Panc1 (cell line): ENCODE measurements at regions of chr15 and their contacts with region 1.

Region 1: DNA sequence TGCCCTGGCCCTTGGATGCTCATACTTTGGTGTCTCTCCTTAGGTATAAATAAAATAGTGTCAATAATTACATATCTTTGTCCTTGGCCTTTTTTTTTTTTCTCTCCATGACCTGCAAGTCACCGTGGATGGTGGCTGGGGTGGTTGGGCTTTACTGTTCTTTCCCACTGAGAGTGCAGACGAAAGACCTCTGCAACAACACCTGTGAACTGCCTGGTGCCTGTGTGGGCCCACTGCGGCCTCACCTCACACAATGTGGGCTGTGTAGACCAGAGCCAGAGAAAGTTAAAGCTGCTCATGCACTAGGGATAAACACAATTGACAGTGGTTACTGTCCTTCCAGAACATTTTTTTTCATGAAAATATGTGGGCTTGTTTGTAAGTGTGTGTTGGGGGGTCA is 39.0 kb downstream of the CCDC32 start:
- DNase-seq: no peak
- ATAC-seq: no peak
- H3K4me3 ChIP-seq: no peak overlapping the region
- H3K27ac ChIP-seq: no peak overlapping the region
- H3K4me1 ChIP-seq: no peaks in the 10 kb centered on the region
- H3K27me3 ChIP-seq: no peaks in the 10 kb centered on the region
- CTCF ChIP-seq: no peak

Region 2: GRCh38 chr15:40328751-40329150 is 197.1 kb before region 1 on chr15:
- CTCF ChIA-PET with region 1: no interaction called
- POLR2A ChIA-PET with region 1: interaction called, 26 read pairs
- in situ Hi-C with region 1: no loop called
- intact Hi-C with region 1: no loop called
- DNase-seq: no peak
- ATAC-seq: no peak
- H3K4me3 ChIP-seq: no peak overlapping the region
- H3K27ac ChIP-seq: no peak overlapping the region
- H3K4me1 ChIP-seq: peaks cover 20% of the 10 kb centered on the region
- H3K27me3 ChIP-seq: no peaks in the 10 kb centered on the region
- CTCF ChIP-seq: no peak

Region 3: DNA sequence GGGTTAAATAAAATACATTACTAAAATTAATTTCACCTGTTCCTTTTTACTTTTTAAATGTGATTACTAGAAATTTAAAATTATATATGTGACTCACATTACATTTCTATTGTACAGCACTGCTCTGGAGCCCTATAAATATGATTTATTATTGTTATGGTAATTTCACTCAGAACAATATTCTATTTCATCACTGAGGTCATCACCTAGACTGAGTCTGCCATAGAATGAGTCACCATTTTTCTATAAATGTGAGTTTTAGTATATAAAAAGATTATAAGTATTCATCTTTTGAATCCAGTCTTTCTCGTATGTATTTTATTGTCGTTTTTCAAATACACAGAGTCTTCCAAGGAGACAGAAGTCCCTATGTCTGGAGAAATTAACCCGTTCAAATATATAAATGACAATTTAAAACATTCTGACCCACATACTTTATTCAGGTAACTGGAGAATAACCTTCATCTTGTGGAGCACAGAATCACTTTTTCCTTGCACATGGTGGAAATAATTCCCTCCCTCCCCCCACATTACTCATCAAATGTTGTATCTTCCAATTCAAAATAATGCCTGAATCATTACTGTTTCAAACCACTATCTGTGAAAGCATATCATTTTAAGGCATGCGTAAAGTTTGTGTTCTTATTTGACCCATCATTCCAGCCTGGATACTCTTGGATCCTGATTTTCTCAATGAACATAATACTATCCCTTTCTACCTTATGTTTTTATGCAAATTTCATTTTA is 25.1 kb before region 1 on chr15:
- CTCF ChIA-PET with region 1: no interaction called
- POLR2A ChIA-PET with region 1: no interaction called
- in situ Hi-C with region 1: no loop called
- intact Hi-C with region 1: no loop called
- DNase-seq: no peak
- ATAC-seq: no peak
- H3K4me3 ChIP-seq: no peak overlapping the region
- H3K27ac ChIP-seq: no peak overlapping the region
- H3K4me1 ChIP-seq: no peaks in the 10 kb centered on the region
- H3K27me3 ChIP-seq: no peaks in the 10 kb centered on the region
- CTCF ChIP-seq: no peak

Region 4: GRCh38 chr15:40803688-40804087 is 277.8 kb after region 1 on chr15:
- CTCF ChIA-PET with region 1: no interaction called
- POLR2A ChIA-PET with region 1: no interaction called
- in situ Hi-C with region 1: no loop called
- intact Hi-C with region 1: no loop called
- DNase-seq: no peak
- ATAC-seq: no peak
- H3K4me3 ChIP-seq: no peak overlapping the region
- H3K27ac ChIP-seq: no peak overlapping the region
- H3K4me1 ChIP-seq: peaks cover 7% of the 10 kb centered on the region
- H3K27me3 ChIP-seq: no peaks in the 10 kb centered on the region
- CTCF ChIP-seq: no peak

Region 5: DNA sequence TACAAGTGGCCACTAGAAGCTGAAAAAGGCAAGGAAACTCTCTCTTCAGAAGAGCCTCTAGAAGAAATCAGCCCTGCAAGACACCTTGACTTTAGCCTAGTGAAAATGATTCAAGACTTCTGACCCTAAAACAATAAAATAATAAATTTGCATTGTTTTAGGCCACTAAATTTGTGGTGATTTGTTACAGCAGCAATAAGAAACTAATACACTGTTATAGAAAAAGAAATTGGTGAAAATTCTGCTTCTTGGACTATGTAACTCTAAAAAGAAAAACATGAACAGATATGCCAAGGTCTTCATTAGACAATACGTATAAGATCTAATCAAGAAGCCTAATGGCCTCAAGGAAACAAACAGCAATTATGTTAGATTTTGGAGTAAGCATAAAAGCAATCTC is 668.6 kb after region 1 on chr15:
- CTCF ChIA-PET with region 1: interaction called, 14 read pairs
- POLR2A ChIA-PET with region 1: no interaction called
- in situ Hi-C with region 1: no loop called
- intact Hi-C with region 1: no loop called
- DNase-seq: no peak
- ATAC-seq: no peak
- H3K4me3 ChIP-seq: no peak overlapping the region
- H3K27ac ChIP-seq: no peak overlapping the region
- H3K4me1 ChIP-seq: no peaks in the 10 kb centered on the region
- H3K27me3 ChIP-seq: no peaks in the 10 kb centered on the region
- CTCF ChIP-seq: no peak